ENCODE measurements at regions of chr9 and their contacts with region 1.

Region 1: GRCh38 chr9:107637421-107638420 is 148.2 kb upstream of the KLF4 start:
- DNase-seq: peak; percentile 98
- ATAC-seq: peak; percentile 90
- H3K4me3 ChIP-seq: peak overlapping the region; percentile 37
- H3K27ac ChIP-seq: peak overlapping the region; percentile 77
- H3K4me1 ChIP-seq: peaks cover 10% of the 10 kb centered on the region
- H3K27me3 ChIP-seq: no peaks in the 10 kb centered on the region
- CTCF ChIP-seq: peak; percentile 28; the same call in 1 of the 2 replicates
- POLR2A ChIP-seq: peak; percentile 91
- RAD21 ChIP-seq: peak; percentile 34

Region 2: GRCh38 chr9:107484117-107484723 is 153.5 kb before region 1 on chr9:
- CTCF ChIA-PET with region 1: no interaction called
- POLR2A ChIA-PET with region 1: interaction called, 22 read pairs
- dilution Hi-C with region 1: no loop called
- in situ Hi-C with region 1: no loop called
- intact Hi-C with region 1: no loop called
- DNase-seq: peak; percentile 81
- ATAC-seq: peak; percentile 74
- H3K4me3 ChIP-seq: no peak overlapping the region
- H3K27ac ChIP-seq: no peak overlapping the region
- H3K4me1 ChIP-seq: peaks cover 2% of the 10 kb centered on the region
- H3K27me3 ChIP-seq: no peaks in the 10 kb centered on the region
- CTCF ChIP-seq: peak; percentile 66
- POLR2A ChIP-seq: peak; percentile 82
- RAD21 ChIP-seq: peak; percentile 78

Region 3: DNA sequence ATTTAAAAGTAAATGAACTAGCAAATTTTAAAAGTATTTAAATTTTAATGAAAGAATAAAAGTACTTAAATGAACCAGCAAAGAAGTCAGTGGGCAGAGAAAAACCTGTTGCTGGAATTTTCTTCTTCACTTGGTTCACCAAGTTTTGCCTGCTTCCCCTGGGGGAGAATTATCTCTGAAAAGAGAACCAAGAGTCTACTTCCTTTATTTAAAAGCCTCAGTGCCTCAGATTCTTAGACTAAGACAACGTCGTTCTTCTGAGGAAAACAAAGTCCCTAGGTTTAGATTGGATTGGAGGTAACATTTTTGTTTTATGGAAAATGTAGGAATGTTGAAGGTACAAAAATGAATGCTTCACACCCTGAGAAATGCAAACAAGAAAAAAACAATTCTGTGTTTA is 140.7 kb before region 1 on chr9:
- CTCF ChIA-PET with region 1: no interaction called
- POLR2A ChIA-PET with region 1: no interaction called
- dilution Hi-C with region 1: no loop called
- in situ Hi-C with region 1: no loop called
- intact Hi-C with region 1: no loop called
- DNase-seq: no peak
- ATAC-seq: no peak
- H3K4me3 ChIP-seq: no peak overlapping the region
- H3K27ac ChIP-seq: no peak overlapping the region
- H3K4me1 ChIP-seq: peaks cover 2% of the 10 kb centered on the region; the same call in 1 of the 2 replicates
- H3K27me3 ChIP-seq: peaks cover 6% of the 10 kb centered on the region
- CTCF ChIP-seq: no peak
- POLR2A ChIP-seq: no peak
- RAD21 ChIP-seq: no peak

Region 4: GRCh38 chr9:107612136-107612535 is 25.6 kb before region 1 on chr9:
- CTCF ChIA-PET with region 1: no interaction called
- POLR2A ChIA-PET with region 1: no interaction called
- dilution Hi-C with region 1: no loop called
- in situ Hi-C with region 1: no loop called
- intact Hi-C with region 1: no loop called
- DNase-seq: no peak
- ATAC-seq: no peak
- H3K4me3 ChIP-seq: no peak overlapping the region
- H3K27ac ChIP-seq: no peak overlapping the region
- H3K4me1 ChIP-seq: peaks cover 5% of the 10 kb centered on the region; the same call in 1 of the 2 replicates
- H3K27me3 ChIP-seq: peaks cover 11% of the 10 kb centered on the region
- CTCF ChIP-seq: no peak
- POLR2A ChIP-seq: no peak
- RAD21 ChIP-seq: no peak

Region 5: GRCh38 chr9:107707428-107707838 is 69.7 kb after region 1 on chr9:
- CTCF ChIA-PET with region 1: no interaction called
- POLR2A ChIA-PET with region 1: no interaction called
- dilution Hi-C with region 1: no loop called
- in situ Hi-C with region 1: no loop called
- intact Hi-C with region 1: loop called (anchors 5 kb)
- DNase-seq: peak; percentile 97
- ATAC-seq: peak; percentile 89
- H3K4me3 ChIP-seq: no peak overlapping the region
- H3K27ac ChIP-seq: peak overlapping the region; percentile 8; the same call in 1 of the 2 replicates
- H3K4me1 ChIP-seq: peaks cover 9% of the 10 kb centered on the region
- H3K27me3 ChIP-seq: no peaks in the 10 kb centered on the region; the same call in 1 of the 2 replicates
- CTCF ChIP-seq: no peak
- POLR2A ChIP-seq: no peak
- RAD21 ChIP-seq: no peak; the same call in 1 of the 2 replicates

Region 6: GRCh38 chr9:107749787-107750444 is 112.2 kb after region 1 on chr9:
- CTCF ChIA-PET with region 1: no interaction called
- POLR2A ChIA-PET with region 1: no interaction called
- dilution Hi-C with region 1: no loop called
- in situ Hi-C with region 1: no loop called
- intact Hi-C with region 1: loop called (anchors 1 kb)
- DNase-seq: peak; percentile 96
- ATAC-seq: peak; percentile 78
- H3K4me3 ChIP-seq: no peak overlapping the region
- H3K27ac ChIP-seq: peak overlapping the region; percentile 81
- H3K4me1 ChIP-seq: peaks cover 19% of the 10 kb centered on the region
- H3K27me3 ChIP-seq: no peaks in the 10 kb centered on the region
- CTCF ChIP-seq: no peak
- POLR2A ChIP-seq: no peak
- RAD21 ChIP-seq: no peak

Region 7: DNA sequence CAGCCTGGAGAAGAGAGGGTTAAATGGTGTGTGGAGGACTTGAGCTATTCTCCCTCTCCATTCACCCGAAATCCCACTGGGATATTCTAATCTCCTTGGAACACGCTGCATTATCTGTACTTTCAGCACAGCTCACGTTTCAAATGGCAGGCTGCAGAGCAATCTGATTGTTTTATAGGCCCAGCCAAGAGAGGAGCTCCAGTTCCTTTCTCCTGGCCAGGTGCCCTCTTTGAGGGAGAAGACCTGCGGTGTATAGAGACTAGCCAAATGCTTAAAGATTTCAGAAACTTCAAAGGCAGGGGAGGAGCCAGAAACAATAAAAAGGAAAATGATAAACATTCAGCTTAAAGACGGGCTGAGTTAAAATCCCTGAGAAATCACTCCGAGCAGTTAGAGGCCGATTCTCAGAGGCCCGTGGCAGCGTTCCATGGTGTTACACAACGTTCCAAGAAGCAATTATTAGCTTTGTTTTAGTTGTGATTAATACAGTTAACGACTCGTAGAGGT is 415.9 kb after region 1 on chr9:
- CTCF ChIA-PET with region 1: no interaction called
- POLR2A ChIA-PET with region 1: no interaction called
- dilution Hi-C with region 1: no loop called
- in situ Hi-C with region 1: no loop called
- intact Hi-C with region 1: loop called (anchors 2 kb)
- DNase-seq: peak; percentile 80
- ATAC-seq: 0 out of 2 replicates have a peak, but pooled peaks have one; percentile 2
- H3K4me3 ChIP-seq: no peak overlapping the region
- H3K27ac ChIP-seq: peak overlapping the region; percentile 70; the same call in 1 of the 2 replicates
- H3K4me1 ChIP-seq: peaks cover 32% of the 10 kb centered on the region
- H3K27me3 ChIP-seq: no peaks in the 10 kb centered on the region
- CTCF ChIP-seq: no peak
- POLR2A ChIP-seq: no peak
- RAD21 ChIP-seq: no peak

Region 8: GRCh38 chr9:108272349-108272899 is 634.7 kb after region 1 on chr9:
- CTCF ChIA-PET with region 1: no interaction called
- POLR2A ChIA-PET with region 1: no interaction called
- dilution Hi-C with region 1: no loop called
- in situ Hi-C with region 1: loop called (anchors 10 kb)
- intact Hi-C with region 1: loop called (anchors 2 kb)
- DNase-seq: peak; percentile 39
- ATAC-seq: peak; percentile 82
- H3K4me3 ChIP-seq: peak overlapping the region; percentile 24; the same call in 1 of the 2 replicates
- H3K27ac ChIP-seq: peak overlapping the region; percentile 88; the same call in 1 of the 2 replicates
- H3K4me1 ChIP-seq: peaks cover 7% of the 10 kb centered on the region; the same call in 1 of the 2 replicates
- H3K27me3 ChIP-seq: no peaks in the 10 kb centered on the region
- CTCF ChIP-seq: peak; percentile 58
- POLR2A ChIP-seq: no peak
- RAD21 ChIP-seq: peak; percentile 70

Measured in IMR-90 (cell line).